ENCODE measurements at regions of chr10 and their contacts with region 1.

Region 1: DNA sequence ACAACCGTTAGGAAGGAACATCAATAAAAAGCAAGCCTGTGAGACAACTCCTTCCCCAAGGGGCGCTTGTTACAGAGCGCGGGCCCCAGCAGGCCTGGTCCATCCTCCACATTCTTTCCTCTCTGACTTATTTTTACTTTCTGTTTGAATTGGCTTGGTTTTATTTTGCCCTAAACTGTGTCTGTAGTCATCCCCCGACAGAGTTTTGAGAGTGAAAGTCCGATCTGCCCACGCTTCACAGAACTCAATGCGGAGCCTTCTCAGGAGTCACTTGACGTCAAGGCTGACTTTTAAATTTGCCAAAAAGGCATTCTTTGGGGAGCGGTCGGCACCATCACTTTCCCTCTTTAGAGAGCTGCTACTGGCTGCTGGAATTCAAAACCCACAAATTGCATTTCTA is 150.1 kb upstream of the KLF6 start:
- DNase-seq: peak; percentile 75
- H3K4me3 Mint-ChIP-seq: peak overlapping the region; percentile 56
- H3K27ac Mint-ChIP-seq: peak overlapping the region; percentile 86
- H3K4me1 Mint-ChIP-seq: peaks cover 67% of the 10 kb centered on the region
- H3K27me3 Mint-ChIP-seq: peaks cover 3% of the 10 kb centered on the region

Region 2: GRCh38 chr10:3605882-3606281 is 329.3 kb before region 1 on chr10:
- intact Hi-C with region 1: loop called (anchors 5 kb)
- DNase-seq: no peak
- H3K4me3 Mint-ChIP-seq: no peak overlapping the region
- H3K27ac Mint-ChIP-seq: peak overlapping the region; percentile 36
- H3K4me1 Mint-ChIP-seq: peaks cover 6% of the 10 kb centered on the region
- H3K27me3 Mint-ChIP-seq: peaks cover 22% of the 10 kb centered on the region

Region 3: GRCh38 chr10:3811291-3811870 is 123.8 kb before region 1 on chr10:
- intact Hi-C with region 1: loop called (anchors 1 kb)
- DNase-seq: peak; percentile 61
- H3K4me3 Mint-ChIP-seq: peak overlapping the region; percentile 60
- H3K27ac Mint-ChIP-seq: peak overlapping the region; percentile 99
- H3K4me1 Mint-ChIP-seq: peaks cover 85% of the 10 kb centered on the region
- H3K27me3 Mint-ChIP-seq: no peaks in the 10 kb centered on the region

Region 4: DNA sequence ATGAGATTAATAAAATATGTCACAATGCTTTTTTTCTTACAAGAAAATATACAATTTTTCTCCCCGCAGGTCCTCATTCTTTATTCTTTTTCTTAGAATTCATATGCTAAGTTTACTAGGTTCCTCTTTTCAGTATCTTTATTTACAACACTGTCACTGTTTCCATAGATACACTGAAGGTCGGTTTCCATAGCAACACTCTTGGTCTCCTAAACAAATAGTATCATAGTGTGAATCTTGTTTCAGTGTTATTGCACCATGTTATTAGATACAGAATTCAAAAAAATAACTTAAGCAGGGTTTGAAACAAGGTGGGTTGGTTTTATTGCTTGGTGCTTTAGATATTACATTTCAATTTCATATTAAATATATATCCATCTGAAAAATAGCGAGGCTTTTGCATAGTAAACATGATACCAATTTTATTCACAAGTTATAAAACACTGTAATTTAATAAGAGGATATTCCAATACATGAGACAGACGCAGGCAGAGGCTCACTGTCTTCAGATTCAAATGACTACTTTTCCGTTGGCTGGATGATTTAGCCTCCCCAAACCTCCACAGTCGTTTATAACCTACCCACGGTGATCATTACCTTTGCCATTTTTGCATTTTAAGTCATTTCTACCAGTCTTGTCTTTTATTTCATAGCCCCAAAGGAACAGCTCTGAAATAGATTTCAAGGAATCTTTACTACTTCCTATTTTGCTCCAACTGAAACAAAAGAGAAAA is 61.2 kb before region 1 on chr10:
- intact Hi-C with region 1: loop called (anchors 1 kb)
- DNase-seq: no peak
- H3K4me3 Mint-ChIP-seq: peak overlapping the region; percentile 62
- H3K27ac Mint-ChIP-seq: peak overlapping the region; percentile 97
- H3K4me1 Mint-ChIP-seq: peaks cover 69% of the 10 kb centered on the region
- H3K27me3 Mint-ChIP-seq: no peaks in the 10 kb centered on the region

Region 5: GRCh38 chr10:3972460-3973301 is 37.5 kb after region 1 on chr10:
- intact Hi-C with region 1: loop called (anchors 1 kb)
- DNase-seq: peak; percentile 42
- H3K4me3 Mint-ChIP-seq: peak overlapping the region; percentile 79
- H3K27ac Mint-ChIP-seq: peak overlapping the region; percentile 98
- H3K4me1 Mint-ChIP-seq: peaks cover 42% of the 10 kb centered on the region
- H3K27me3 Mint-ChIP-seq: no peaks in the 10 kb centered on the region

Region 6: DNA sequence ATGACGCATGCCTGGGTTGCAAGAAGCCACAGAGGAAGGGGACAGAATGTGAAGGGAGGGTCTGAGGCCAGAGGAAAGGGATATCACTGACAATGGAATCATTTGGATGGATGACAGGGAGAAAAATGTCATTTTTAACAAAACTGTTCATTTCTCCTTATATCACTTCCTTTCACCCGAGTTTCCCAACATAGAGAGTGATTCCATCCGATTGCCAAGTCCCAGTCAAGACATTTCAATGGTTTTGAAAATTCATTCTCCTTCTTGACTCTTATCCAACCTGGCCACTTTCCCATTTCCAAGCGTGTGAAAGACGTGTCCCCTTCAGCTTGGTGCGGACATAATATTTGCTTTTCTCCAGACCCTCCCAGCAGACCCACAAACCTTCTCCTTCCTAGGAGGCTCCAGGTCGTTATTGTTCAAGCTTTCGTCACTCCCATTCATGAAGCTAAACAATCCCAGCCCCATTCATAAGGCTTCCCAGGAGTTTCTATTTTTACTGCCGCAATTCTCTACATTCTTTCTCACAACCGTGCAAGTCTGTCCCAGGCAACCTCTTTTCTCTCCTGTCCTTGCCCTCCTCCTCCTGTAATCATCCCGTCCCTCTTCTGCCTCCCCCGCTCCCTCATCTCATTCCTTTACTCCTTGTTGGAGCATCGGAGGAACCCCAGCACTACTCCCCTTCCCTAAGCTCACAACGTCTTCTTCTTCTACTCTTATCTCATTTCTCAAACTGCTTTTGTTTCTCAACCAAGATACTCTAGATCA is 151.2 kb after region 1 on chr10:
- intact Hi-C with region 1: no loop called
- DNase-seq: no peak
- H3K4me3 Mint-ChIP-seq: no peak overlapping the region
- H3K27ac Mint-ChIP-seq: no peak overlapping the region
- H3K4me1 Mint-ChIP-seq: no peaks in the 10 kb centered on the region
- H3K27me3 Mint-ChIP-seq: peaks cover 8% of the 10 kb centered on the region

Region 7: DNA sequence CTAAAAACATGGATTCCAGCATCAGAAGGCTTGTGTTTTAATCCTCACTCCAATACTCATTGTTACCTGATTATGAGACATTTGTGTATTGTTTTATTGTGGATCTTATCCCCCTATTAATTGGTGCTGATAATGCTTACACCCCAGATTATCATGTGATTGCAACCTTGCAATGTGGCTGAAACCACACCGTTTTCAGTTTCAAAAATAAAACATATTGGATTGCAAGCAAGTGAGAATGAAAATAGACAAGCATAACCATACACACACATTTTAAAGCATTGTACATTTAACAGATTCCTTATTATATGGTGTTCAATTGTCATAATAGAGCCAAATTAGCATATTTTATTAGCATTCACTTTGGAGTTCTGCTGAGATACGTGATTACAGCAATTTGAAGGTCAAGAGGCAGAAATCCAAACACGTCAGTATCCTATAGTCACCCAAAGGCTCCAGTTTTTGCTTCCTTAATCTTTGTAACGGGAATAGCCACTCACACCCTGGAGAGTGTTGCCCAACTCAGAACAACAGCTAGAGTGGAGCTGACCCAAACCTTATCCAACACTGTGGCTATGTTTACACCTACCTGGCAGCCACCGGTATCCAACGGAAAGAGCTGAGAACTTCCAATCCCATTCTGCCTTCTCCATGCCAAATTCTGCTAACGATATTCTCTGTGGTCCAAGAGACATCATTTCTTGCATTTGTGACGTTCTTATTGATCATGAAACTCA is 166.9 kb after region 1 on chr10:
- intact Hi-C with region 1: no loop called
- DNase-seq: no peak
- H3K4me3 Mint-ChIP-seq: no peak overlapping the region
- H3K27ac Mint-ChIP-seq: no peak overlapping the region
- H3K4me1 Mint-ChIP-seq: peaks cover 17% of the 10 kb centered on the region
- H3K27me3 Mint-ChIP-seq: peaks cover 2% of the 10 kb centered on the region

Region 8: DNA sequence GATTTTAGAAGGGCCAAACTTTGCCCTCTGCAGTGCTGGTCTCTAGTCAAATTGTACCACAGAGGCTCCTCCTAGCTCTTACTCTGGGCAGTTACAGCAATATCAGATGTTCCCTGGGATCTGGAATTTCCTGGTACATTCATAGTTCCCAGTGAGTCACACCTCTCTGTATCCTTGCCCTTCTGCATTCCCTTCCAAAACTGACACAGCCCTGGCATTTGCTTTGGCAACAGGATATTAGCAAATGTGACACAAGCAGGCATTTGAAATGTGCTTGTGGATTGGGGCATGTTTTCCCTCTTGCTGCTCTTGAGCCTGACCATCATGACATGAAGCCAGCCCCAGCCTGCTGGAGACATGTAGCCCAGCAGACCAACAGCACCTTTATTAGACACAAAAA is 606.2 kb after region 1 on chr10:
- intact Hi-C with region 1: loop called (anchors 10 kb)
- DNase-seq: no peak
- H3K4me3 Mint-ChIP-seq: no peak overlapping the region
- H3K27ac Mint-ChIP-seq: no peak overlapping the region
- H3K4me1 Mint-ChIP-seq: peaks cover 6% of the 10 kb centered on the region
- H3K27me3 Mint-ChIP-seq: peaks cover 11% of the 10 kb centered on the region

Measured in activated T-helper 1 cell treated with anti-CD3 and anti-CD28 coated beads, Interleukin-12 subunit alpha, Interleukin-12 subunit beta, Interleukin-2, Interleukin-4 antibody, amounts not matched to agents 30 ng/mL and 10 ng/mL and 1 ng/mL, durations not matched to agents 14 hours and 24 hours and 36 hours (primary cell).